CD4-positive, alpha-beta T cell (primary cell): ENCODE measurements at regions of chr22 and their contacts with region 1.

Region 1: DNA sequence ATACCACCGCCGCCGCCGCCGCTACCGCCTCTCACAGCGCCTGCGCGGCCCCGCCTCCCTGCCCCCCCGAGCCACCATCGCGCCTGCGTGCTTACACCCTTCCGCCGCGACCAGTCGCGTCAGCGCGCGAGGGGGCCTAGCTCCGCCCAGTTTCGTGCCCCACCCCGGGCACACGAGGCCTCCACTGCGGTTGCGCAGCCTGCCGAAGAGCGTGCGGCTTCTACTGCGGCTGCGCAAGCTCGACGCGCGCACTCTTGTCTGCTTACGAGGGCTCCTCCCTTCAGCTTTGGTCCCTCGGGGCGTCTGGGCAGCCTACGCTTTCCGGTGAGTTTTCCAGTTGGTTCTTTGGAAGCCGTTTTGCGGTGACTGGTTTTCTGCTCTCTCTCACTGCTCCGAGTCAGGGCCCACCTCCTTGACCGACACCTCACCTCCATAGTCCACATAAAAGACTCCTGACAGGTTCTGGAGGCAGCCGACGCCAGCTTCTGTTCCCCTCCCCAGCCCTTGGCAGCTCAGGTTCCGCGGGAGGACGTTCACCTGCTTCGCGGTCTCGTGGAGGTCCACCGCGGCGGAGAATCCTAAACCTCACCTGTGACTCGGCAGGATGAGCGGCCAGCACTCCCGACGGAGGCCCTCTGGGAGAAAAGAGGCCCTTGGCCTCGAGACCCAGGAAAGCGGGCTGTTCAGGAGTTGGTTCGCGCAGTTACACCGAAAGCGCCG is at the start of gene PITPNB:
- DNase-seq: peak; percentile 98 to 100 (median 99)
- ATAC-seq: peak; percentile 86
- H3K4me3 ChIP-seq: peak within 1 kb of the TSS; percentile 79
- H3K4me3 Mint-ChIP-seq: peak within 1 kb of the TSS; percentile 100
- H3K27ac ChIP-seq: peak within 1 kb of the TSS; percentile 86 to 92
- H3K27ac Mint-ChIP-seq: peak within 1 kb of the TSS; percentile 99
- H3K4me1 ChIP-seq: peaks cover 19% of the 10 kb centered on the region
- H3K4me1 Mint-ChIP-seq: peaks cover 85% of the 10 kb centered on the region
- H3K27me3 ChIP-seq: no peaks in the 10 kb centered on the region
- H3K27me3 Mint-ChIP-seq: no peaks in the 10 kb centered on the region
- CTCF ChIP-seq: no peak
- total RNA-seq, gene PITPNB: 37.6 to 38.7 TPM

Region 2: DNA sequence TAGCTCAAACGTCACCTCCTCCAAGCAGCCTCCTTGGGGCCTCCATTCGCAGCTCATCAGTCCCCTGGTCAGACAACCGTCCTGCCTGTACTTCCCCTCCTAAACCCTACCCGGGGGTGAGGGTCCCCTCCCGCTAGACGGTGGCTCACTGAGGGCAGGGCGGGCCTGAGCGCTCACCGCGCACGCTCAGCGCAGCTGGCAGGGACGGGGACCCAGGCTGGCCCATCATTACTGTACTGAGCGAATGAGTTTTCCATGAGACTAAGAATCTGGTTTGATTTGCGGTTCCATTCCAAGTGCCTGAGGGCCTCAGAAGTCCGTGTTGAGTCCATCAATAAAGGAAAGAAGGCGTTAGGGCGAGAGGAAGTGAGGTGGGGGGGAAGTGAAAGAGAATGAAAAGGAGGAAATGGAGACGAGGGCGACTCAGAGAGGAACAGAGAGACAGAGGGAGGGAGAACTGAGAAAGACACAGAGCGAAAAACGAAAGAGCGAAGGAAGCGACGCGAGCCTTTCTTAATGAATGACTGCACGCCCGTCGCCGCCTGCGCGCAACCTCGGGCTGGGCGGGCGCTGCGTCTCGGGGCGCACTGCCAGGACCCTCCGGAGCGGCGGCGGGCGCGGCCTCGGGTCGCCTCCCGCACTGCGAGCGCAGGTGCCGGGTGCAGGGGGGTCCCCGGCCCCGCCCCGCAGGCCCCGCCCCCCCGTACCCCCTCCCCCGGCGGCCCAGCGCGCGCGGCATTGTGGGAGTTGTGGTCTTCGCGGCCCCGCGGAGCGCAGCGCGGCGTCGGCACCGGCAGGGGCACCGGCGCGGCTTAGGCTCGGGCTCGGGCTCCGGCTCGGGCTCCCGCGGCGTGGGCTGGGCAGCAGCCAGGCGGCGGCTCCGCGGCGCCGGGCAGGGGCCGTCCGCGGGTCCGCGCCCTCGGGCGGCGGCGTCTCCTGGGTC is 1490.6 kb before region 1 on chr22 and contains the start of gene ASPHD2:
- CTCF ChIA-PET with region 1: no interaction called
- POLR2A ChIA-PET with region 1: no interaction called
- intact Hi-C with region 1: loop called in 1 of 2 experiments (anchors 10 kb)
- DNase-seq: peak; percentile 61 to 92 (median 77)
- ATAC-seq: peak; percentile 85
- H3K4me3 ChIP-seq: peak within 1 kb of the TSS; percentile 87
- H3K4me3 Mint-ChIP-seq: peak within 1 kb of the TSS; percentile 98
- H3K27ac ChIP-seq: peak within 1 kb of the TSS; percentile 96 to 97
- H3K27ac Mint-ChIP-seq: peak within 1 kb of the TSS; percentile 94
- H3K4me1 ChIP-seq: peaks cover 30% of the 10 kb centered on the region
- H3K4me1 Mint-ChIP-seq: peaks cover 31% of the 10 kb centered on the region
- H3K27me3 ChIP-seq: no peaks in the 10 kb centered on the region
- H3K27me3 Mint-ChIP-seq: no peaks in the 10 kb centered on the region
- CTCF ChIP-seq: no peak
- total RNA-seq, gene ASPHD2: 0.70 to 0.85 TPM

Region 3: DNA sequence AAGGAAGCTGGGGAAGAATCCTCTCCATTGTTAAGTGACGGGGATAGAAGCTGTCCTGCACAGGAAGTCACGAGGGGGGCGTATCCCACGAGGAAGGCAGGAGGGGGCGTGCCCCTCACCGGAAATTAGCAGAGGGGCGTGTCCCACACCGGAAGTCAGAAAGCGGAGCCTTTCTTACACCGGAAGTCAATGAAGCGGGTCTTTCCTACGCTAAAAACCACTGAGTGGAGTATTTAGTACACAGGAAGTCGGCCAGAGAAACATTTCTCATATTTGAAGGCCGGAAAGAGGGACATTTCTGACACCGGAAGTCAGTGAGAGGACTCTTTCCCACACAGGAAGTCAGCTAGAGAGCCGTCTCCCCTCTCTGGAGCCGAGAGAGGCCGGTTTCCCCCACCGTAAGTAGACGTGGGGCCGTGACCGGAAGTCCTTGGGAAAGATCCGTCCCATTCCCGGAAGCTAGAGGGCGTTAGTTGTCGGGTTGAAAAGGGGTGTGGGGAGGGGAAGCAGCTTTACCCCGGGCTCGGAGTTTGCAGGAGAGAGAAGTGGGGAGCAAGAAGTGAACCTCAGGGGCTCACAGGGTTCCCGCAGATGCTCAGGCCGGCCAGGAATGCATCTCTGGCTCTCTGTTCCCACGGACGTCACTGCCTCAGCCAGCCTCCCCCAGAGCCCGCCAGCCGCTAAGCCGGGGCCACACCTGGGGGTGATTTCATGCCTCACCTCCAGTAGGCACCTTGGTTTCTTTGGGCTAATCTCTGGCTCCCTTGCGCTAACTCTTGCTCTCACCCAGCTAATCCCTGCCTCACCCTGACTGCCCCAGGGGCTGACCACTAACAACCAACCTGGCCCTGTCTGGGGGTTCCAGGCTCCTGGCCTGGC is 1246.6 kb before region 1 on chr22:
- CTCF ChIA-PET with region 1: no interaction called
- POLR2A ChIA-PET with region 1: interaction called, 7 read pairs
- intact Hi-C with region 1: loop called in 1 of 2 experiments (anchors 5 kb)
- DNase-seq: peak; percentile 77 to 97 (median 91)
- ATAC-seq: peak; percentile 67
- H3K4me3 ChIP-seq: peak overlapping the region; percentile 79
- H3K4me3 Mint-ChIP-seq: peak overlapping the region; percentile 97
- H3K27ac ChIP-seq: peak overlapping the region; percentile 88 to 90
- H3K27ac Mint-ChIP-seq: peak overlapping the region; percentile 95
- H3K4me1 ChIP-seq: peaks cover 93% of the 10 kb centered on the region
- H3K4me1 Mint-ChIP-seq: peaks cover 84% of the 10 kb centered on the region
- H3K27me3 ChIP-seq: no peaks in the 10 kb centered on the region
- H3K27me3 Mint-ChIP-seq: no peaks in the 10 kb centered on the region
- CTCF ChIP-seq: peak; percentile 23

Region 4: DNA sequence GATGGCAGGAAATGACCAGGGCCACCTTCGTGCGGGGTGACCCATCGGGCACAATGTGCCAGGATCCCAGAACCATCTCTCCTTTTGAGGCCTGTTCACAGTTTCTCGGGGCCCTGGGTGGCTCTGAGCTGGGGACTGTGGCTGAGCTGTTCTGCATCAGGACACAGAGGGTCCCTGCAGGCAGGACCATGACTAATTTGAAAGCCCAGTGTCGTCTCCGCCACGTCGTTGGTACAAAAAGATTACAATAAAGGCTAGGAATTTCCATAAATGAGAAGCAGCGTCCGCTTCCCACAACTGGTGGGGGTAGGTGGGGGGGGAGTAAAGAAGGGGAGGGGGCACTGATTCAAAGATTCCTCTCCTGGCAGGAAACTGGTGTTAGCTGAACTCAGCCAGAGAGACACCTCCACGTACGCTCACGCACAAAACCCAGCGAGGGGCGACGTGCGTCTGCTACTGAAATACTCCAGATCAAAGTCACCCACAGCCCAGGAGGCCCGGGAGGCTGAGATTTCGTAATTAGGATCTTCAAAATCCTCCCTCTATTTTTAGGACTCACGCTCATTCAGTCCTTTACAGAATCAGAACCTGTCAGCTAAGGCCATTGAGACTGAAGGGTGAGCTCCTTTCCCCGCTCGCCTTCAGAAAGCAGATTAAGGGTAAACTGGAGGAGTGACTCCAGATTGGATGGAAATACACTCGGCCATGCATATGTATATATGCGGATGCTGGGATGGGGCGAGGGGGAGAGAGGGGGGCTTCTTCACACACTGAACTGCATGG is 128.8 kb before region 1 on chr22:
- CTCF ChIA-PET with region 1: no interaction called
- POLR2A ChIA-PET with region 1: no interaction called
- intact Hi-C with region 1: no loop called
- DNase-seq: no peak
- ATAC-seq: no peak
- H3K4me3 ChIP-seq: no peak overlapping the region
- H3K4me3 Mint-ChIP-seq: no peak overlapping the region
- H3K27ac ChIP-seq: no peak overlapping the region
- H3K27ac Mint-ChIP-seq: no peak overlapping the region
- H3K4me1 ChIP-seq: no peaks in the 10 kb centered on the region
- H3K4me1 Mint-ChIP-seq: no peaks in the 10 kb centered on the region
- H3K27me3 ChIP-seq: peaks cover 4 to 6% of the 10 kb centered on the region in 2 experiments
- H3K27me3 Mint-ChIP-seq: peaks cover 20% of the 10 kb centered on the region
- CTCF ChIP-seq: no peak

Region 5: DNA sequence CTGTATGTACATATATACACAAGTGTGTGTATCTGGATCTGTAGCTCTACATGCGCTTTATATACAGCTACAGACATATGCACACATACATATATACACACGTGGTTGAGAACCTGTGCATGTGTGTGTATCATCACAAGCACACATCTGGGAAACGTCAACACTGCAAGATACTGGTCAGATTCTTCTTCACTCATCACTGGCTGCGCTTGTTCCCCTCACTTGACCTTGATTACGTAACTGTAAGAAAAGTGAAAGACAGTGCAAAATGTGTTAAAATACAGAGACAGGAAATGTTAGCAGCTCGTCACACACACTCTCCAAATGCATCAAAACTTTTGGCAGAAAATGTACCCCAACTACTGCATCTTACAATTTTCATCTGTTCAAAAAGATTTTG is 66.0 kb before region 1 on chr22:
- CTCF ChIA-PET with region 1: no interaction called
- POLR2A ChIA-PET with region 1: no interaction called
- intact Hi-C with region 1: no loop called
- DNase-seq: peak in 1 of 14 experiments; percentile 12
- ATAC-seq: no peak
- H3K4me3 ChIP-seq: no peak overlapping the region
- H3K4me3 Mint-ChIP-seq: no peak overlapping the region
- H3K27ac ChIP-seq: no peak overlapping the region
- H3K27ac Mint-ChIP-seq: no peak overlapping the region
- H3K4me1 ChIP-seq: no peaks in the 10 kb centered on the region
- H3K4me1 Mint-ChIP-seq: no peaks in the 10 kb centered on the region
- H3K27me3 ChIP-seq: no peaks in the 10 kb centered on the region
- H3K27me3 Mint-ChIP-seq: no peaks in the 10 kb centered on the region
- CTCF ChIP-seq: no peak

Region 6: GRCh38 chr22:27930331-27931060 is 11.1 kb after region 1 on chr22:
- CTCF ChIA-PET with region 1: interaction called, 4 read pairs
- POLR2A ChIA-PET with region 1: interaction called, 11 read pairs
- intact Hi-C with region 1: no loop called
- DNase-seq: no peak
- ATAC-seq: no peak
- H3K4me3 ChIP-seq: no peak overlapping the region
- H3K4me3 Mint-ChIP-seq: no peak overlapping the region
- H3K27ac ChIP-seq: no peak overlapping the region
- H3K27ac Mint-ChIP-seq: no peak overlapping the region
- H3K4me1 ChIP-seq: no peaks in the 10 kb centered on the region
- H3K4me1 Mint-ChIP-seq: peaks cover 9% of the 10 kb centered on the region
- H3K27me3 ChIP-seq: no peaks in the 10 kb centered on the region
- H3K27me3 Mint-ChIP-seq: no peaks in the 10 kb centered on the region
- CTCF ChIP-seq: no peak

Region 7: DNA sequence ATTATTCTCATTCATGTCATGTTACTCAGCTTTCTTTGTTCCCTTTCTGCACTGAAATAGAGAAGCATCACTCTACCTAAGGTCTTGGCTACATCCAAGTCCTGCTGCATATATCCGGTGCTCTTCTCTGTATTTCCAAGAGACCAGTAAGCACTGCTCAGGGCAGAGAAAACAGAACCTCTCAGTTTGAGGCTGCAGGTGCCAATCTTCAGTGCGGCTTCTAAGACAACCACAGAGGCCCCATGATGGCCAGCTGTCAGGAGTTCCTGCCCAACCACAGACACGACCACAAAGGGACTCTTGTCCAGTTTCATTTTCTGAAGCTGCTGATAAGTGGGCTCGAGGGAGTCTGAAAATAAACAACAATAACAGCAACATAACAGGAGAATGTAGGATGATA is 378.1 kb after region 1 on chr22:
- CTCF ChIA-PET with region 1: no interaction called
- POLR2A ChIA-PET with region 1: no interaction called
- intact Hi-C with region 1: no loop called
- DNase-seq: no peak
- ATAC-seq: no peak
- H3K4me3 ChIP-seq: no peak overlapping the region
- H3K4me3 Mint-ChIP-seq: no peak overlapping the region
- H3K27ac ChIP-seq: no peak overlapping the region
- H3K27ac Mint-ChIP-seq: no peak overlapping the region
- H3K4me1 ChIP-seq: no peaks in the 10 kb centered on the region
- H3K4me1 Mint-ChIP-seq: no peaks in the 10 kb centered on the region
- H3K27me3 ChIP-seq: no peaks in the 10 kb centered on the region
- H3K27me3 Mint-ChIP-seq: no peaks in the 10 kb centered on the region
- CTCF ChIP-seq: no peak

Region 8: GRCh38 chr22:28882878-28883656 is 963.7 kb after region 1 on chr22 and contains the start of gene ZNRF3:
- CTCF ChIA-PET with region 1: no interaction called
- POLR2A ChIA-PET with region 1: interaction called, 5 read pairs
- intact Hi-C with region 1: loop called in 1 of 2 experiments (anchors 5 kb)
- DNase-seq: peak; percentile 86 to 96 (median 92)
- ATAC-seq: peak; percentile 87
- H3K4me3 ChIP-seq: peak within 1 kb of the TSS; percentile 82
- H3K4me3 Mint-ChIP-seq: peak within 1 kb of the TSS; percentile 94
- H3K27ac ChIP-seq: no peak within 1 kb of the TSS
- H3K27ac Mint-ChIP-seq: peak within 1 kb of the TSS; percentile 74
- H3K4me1 ChIP-seq: peaks cover 16% of the 10 kb centered on the region
- H3K4me1 Mint-ChIP-seq: peaks cover 23% of the 10 kb centered on the region
- H3K27me3 ChIP-seq: peaks cover 4 to 7% of the 10 kb centered on the region in 2 experiments
- H3K27me3 Mint-ChIP-seq: peaks cover 23% of the 10 kb centered on the region
- CTCF ChIP-seq: no peak
- total RNA-seq, gene ZNRF3: 0.38 to 0.61 TPM

Region 9: DNA sequence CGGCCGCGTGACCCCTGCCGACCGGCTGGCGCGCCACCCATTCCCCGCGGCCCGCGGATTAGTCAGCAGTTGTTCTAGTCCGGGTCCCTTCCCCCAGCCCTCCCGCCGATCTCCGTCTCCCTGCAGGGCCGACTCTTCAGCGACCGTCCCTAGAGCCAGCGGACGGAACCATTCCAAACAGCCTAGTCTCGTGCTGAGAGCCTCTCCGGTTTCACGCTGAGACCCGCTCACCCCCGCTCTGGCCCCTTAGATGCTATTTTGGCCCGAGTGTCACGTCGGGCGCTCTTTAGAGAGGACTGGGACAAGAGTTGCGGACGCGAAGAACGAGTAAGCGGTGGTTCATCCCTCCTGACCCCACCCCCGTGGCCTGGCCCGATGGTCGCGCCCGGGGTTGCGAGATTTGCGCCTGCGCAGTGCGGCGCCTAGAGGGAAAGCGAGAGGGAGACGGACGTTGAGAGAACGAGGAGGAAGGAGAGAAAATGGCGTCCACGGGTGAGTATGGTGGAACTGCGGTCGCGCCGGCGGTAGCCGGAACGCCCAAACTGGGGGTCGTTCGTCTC is 1348.6 kb after region 1 on chr22 and contains the starts of genes EWSR1 and RHBDD3:
- CTCF ChIA-PET with region 1: no interaction called
- POLR2A ChIA-PET with region 1: no interaction called
- intact Hi-C with region 1: loop called in 1 of 2 experiments (anchors 10 kb)
- DNase-seq: peak; percentile 92 to 98 (median 96)
- ATAC-seq: peak; percentile 84
- H3K4me3 ChIP-seq: peak within 1 kb of the TSS; percentile 98
- H3K4me3 Mint-ChIP-seq: peak within 1 kb of the TSS; percentile 95
- H3K27ac ChIP-seq: peak within 1 kb of the TSS; percentile 96 to 97
- H3K27ac Mint-ChIP-seq: peak within 1 kb of the TSS; percentile 98
- H3K4me1 ChIP-seq: peaks cover 50% of the 10 kb centered on the region
- H3K4me1 Mint-ChIP-seq: peaks cover 64% of the 10 kb centered on the region
- H3K27me3 ChIP-seq: no peaks in the 10 kb centered on the region
- H3K27me3 Mint-ChIP-seq: no peaks in the 10 kb centered on the region
- CTCF ChIP-seq: no peak
- total RNA-seq, gene EWSR1: 292 to 309 TPM
- total RNA-seq, gene RHBDD3: 9.0 to 11.7 TPM